ENCODE measurements at regions of chr10 and their contacts with region 1.

Region 1: DNA sequence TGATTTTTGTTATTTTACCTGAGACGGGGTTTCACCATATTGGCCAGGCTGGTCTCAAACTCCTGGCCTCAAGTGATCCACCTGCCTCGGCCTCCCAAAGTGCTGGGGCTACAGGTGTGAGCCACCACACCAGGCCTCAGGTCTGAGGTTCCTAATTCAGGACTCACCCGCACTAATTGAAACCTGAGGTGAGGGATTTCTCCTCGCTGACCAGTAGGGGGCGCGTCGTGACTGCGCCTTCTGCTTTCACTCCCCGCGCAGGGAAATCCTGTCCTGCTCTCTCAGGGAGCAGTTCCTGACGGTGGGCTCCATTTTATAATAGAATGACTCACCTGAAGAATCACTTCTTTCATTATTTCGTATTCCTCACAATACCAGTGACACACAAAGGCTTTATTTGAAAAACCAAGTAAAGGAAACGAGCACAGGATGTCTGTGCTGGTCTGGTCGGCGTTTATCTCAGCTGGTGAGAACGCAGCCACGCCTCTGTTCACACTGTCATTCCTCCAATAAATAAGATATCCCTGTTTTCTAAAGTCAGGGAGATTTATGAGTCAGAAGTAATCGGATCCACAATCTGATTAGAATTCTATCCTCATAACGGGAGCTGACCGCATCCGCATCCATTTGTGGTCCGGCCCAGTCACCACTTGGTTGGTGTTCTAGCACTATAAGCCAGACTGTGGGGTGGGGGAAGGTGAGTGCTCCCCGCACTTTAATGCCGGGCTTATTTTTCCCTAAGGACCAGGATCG is 35.4 kb downstream of the BAG3 start:
- DNase-seq: peak; percentile 68 to 93 (median 80)
- ATAC-seq: peak; percentile 88
- H3K4me3 ChIP-seq: peak overlapping the region; percentile 44
- H3K4me3 Mint-ChIP-seq: peak overlapping the region; percentile 71
- H3K27ac ChIP-seq: no peak overlapping the region
- H3K27ac Mint-ChIP-seq: peak overlapping the region; percentile 60
- H3K4me1 ChIP-seq: peaks cover 13% of the 10 kb centered on the region
- H3K4me1 Mint-ChIP-seq: peaks cover 23% of the 10 kb centered on the region
- H3K27me3 ChIP-seq: no peaks in the 10 kb centered on the region
- H3K27me3 Mint-ChIP-seq: no peaks in the 10 kb centered on the region
- CTCF ChIP-seq: peak; percentile 99

Region 2: DNA sequence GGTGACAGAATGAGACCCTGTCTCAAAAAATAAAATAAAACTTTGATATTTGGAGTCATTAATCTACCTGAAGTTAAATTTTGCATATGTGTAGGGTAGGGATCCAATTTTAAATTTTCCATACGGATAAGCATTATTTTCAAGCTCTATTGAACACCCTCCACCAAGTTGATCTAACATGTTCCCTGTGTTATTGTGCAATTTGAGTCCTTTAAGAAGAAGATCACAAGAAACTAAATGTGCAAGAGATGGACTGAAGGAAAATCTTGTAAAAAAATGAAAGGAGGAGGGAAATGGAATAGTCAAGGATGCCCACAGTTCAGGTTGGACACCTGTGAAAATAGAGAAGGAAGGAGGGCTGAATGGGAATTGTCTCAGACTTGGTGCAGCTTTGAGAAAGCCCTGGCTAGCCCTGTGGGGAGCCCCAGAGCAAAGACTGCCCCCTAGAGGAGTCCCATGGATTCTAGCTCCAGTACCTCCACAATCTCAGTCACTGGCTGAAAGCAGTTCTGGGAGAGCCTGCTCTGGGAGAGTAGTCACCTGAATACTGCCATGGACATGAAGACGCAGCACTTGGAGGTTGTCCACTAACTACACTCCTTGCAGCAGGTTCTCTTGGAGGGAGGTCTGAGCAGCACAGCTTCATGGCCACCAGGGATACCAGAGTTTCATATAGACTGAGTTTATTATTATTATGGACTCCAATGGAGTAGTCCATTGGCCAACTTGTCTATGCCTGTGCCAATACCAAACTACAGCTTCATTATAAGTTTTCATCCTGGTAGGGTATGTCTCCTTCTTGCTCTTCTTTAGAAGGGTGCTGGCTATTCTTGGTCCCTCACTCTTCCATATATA is 84.1 kb before region 1 on chr10:
- CTCF ChIA-PET with region 1: interaction called, 10 read pairs
- POLR2A ChIA-PET with region 1: no interaction called
- intact Hi-C with region 1: no loop called
- DNase-seq: peak in 8 of 14 experiments; percentile 4 to 65 (median 29)
- ATAC-seq: peak; percentile 68
- H3K4me3 ChIP-seq: no peak overlapping the region
- H3K4me3 Mint-ChIP-seq: no peak overlapping the region
- H3K27ac ChIP-seq: no peak overlapping the region
- H3K27ac Mint-ChIP-seq: no peak overlapping the region
- H3K4me1 ChIP-seq: peaks cover 5% of the 10 kb centered on the region
- H3K4me1 Mint-ChIP-seq: peaks cover 21% of the 10 kb centered on the region
- H3K27me3 ChIP-seq: no peaks in the 10 kb centered on the region
- H3K27me3 Mint-ChIP-seq: no peaks in the 10 kb centered on the region
- CTCF ChIP-seq: peak; percentile 48

Region 3: GRCh38 chr10:119608316-119609155 is 78.1 kb before region 1 on chr10:
- CTCF ChIA-PET with region 1: interaction called, 5 read pairs
- POLR2A ChIA-PET with region 1: interaction called, 3 read pairs
- intact Hi-C with region 1: loop called in 1 of 2 experiments (anchors 2 kb)
- DNase-seq: peak in 12 of 14 experiments; percentile 11 to 66 (median 34)
- ATAC-seq: peak; percentile 63
- H3K4me3 ChIP-seq: no peak overlapping the region
- H3K4me3 Mint-ChIP-seq: no peak overlapping the region
- H3K27ac ChIP-seq: no peak overlapping the region
- H3K27ac Mint-ChIP-seq: no peak overlapping the region
- H3K4me1 ChIP-seq: peaks cover 6% of the 10 kb centered on the region
- H3K4me1 Mint-ChIP-seq: no peaks in the 10 kb centered on the region
- H3K27me3 ChIP-seq: no peaks in the 10 kb centered on the region
- H3K27me3 Mint-ChIP-seq: no peaks in the 10 kb centered on the region
- CTCF ChIP-seq: peak; percentile 54

Region 4: GRCh38 chr10:119750391-119751230 is 64.0 kb after region 1 on chr10:
- CTCF ChIA-PET with region 1: interaction called, 10 read pairs
- POLR2A ChIA-PET with region 1: no interaction called
- intact Hi-C with region 1: loop called (anchors 2 kb)
- DNase-seq: peak; percentile 30 to 77 (median 44)
- ATAC-seq: peak; percentile 99
- H3K4me3 ChIP-seq: no peak overlapping the region
- H3K4me3 Mint-ChIP-seq: no peak overlapping the region
- H3K27ac ChIP-seq: no peak overlapping the region
- H3K27ac Mint-ChIP-seq: no peak overlapping the region
- H3K4me1 ChIP-seq: no peaks in the 10 kb centered on the region
- H3K4me1 Mint-ChIP-seq: peaks cover 14% of the 10 kb centered on the region
- H3K27me3 ChIP-seq: no peaks in the 10 kb centered on the region
- H3K27me3 Mint-ChIP-seq: no peaks in the 10 kb centered on the region
- CTCF ChIP-seq: peak; percentile 85

Region 5: DNA sequence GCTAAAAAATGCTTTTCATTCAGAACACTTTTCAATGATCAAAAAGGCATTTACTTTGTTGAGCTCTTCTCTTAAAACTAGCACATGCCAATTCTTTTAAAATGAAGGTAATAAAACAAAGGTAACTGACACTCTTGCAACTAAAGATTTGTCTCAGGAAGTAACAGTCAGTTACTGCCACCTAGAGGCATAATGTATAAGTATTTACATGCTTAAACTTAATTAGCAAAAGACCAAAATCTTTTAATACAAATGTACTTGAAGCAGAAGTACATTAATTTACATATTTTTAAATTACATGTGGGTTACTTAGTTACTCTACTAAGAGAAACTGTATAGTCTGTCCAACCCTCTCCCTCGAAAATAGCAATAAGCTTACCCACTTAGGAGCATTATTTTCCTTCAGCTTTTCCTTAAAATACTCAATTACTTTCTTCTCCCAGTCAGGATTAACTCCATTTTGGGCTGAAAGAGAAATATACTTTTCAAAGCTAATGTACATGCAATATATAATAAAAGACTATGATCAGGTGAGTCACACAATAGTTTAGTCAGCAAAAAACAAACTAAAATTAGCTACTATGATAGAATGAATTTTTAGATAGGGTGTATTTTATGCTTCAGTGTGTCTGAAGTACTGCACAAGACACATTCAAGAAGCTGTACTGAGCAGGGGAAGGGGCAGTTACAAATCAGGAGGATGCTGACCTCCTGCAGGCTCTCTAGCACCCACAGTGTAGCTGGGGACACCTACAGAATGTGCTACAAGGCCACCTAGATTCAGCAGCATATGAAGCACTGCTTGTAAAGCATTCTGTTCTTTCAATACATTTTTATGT is 173.0 kb after region 1 on chr10:
- CTCF ChIA-PET with region 1: interaction called, 11 read pairs
- POLR2A ChIA-PET with region 1: no interaction called
- intact Hi-C with region 1: loop called (anchors 1 kb)
- DNase-seq: peak in 3 of 14 experiments; percentile 65 to 73 (median 72)
- ATAC-seq: peak; percentile 60
- H3K4me3 ChIP-seq: no peak overlapping the region
- H3K4me3 Mint-ChIP-seq: no peak overlapping the region
- H3K27ac ChIP-seq: no peak overlapping the region
- H3K27ac Mint-ChIP-seq: peak overlapping the region; percentile 4
- H3K4me1 ChIP-seq: peaks cover 4% of the 10 kb centered on the region
- H3K4me1 Mint-ChIP-seq: peaks cover 46% of the 10 kb centered on the region
- H3K27me3 ChIP-seq: no peaks in the 10 kb centered on the region
- H3K27me3 Mint-ChIP-seq: no peaks in the 10 kb centered on the region
- CTCF ChIP-seq: peak; percentile 88

Region 6: DNA sequence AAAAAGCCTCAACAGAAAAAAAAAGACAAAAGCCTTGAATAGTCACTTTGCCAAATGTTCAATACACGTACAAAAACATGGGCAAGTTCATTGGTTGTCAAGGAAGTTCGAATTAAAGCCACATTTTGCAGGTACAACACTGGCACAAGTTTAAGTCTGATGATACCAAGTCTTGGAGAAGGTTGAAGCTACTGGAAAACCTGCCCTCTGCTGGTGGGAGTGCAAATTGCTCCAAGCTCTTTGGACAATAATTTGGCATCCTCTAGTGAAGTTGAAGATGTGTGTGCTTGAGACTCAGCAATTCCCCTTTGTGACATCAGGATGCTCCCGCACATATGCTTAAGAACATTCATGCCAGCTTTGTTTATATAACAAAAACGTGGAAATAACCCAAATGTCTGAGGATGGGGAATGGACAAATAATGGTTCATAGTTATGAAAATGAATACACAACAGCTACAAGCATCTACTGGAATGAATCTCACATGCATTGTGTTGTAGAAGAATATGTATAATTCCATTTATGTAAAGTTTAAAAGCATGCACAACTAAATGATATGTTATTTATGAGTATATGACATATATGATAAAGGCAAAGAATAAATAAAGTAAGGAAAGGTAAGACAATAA is 650.4 kb after region 1 on chr10:
- CTCF ChIA-PET with region 1: no interaction called
- POLR2A ChIA-PET with region 1: no interaction called
- intact Hi-C with region 1: loop called in 1 of 2 experiments (anchors 5 kb)
- DNase-seq: peak; percentile 18 to 59 (median 40)
- ATAC-seq: no peak
- H3K4me3 ChIP-seq: no peak overlapping the region
- H3K4me3 Mint-ChIP-seq: no peak overlapping the region
- H3K27ac ChIP-seq: no peak overlapping the region
- H3K27ac Mint-ChIP-seq: no peak overlapping the region
- H3K4me1 ChIP-seq: no peaks in the 10 kb centered on the region
- H3K4me1 Mint-ChIP-seq: no peaks in the 10 kb centered on the region
- H3K27me3 ChIP-seq: no peaks in the 10 kb centered on the region
- H3K27me3 Mint-ChIP-seq: peaks cover 14% of the 10 kb centered on the region
- CTCF ChIP-seq: peak; percentile 88